Heart right ventricle (tissue), 16 donors: ENCODE measurements at regions of chr1 and their contacts with region 1.

Region 1: DNA sequence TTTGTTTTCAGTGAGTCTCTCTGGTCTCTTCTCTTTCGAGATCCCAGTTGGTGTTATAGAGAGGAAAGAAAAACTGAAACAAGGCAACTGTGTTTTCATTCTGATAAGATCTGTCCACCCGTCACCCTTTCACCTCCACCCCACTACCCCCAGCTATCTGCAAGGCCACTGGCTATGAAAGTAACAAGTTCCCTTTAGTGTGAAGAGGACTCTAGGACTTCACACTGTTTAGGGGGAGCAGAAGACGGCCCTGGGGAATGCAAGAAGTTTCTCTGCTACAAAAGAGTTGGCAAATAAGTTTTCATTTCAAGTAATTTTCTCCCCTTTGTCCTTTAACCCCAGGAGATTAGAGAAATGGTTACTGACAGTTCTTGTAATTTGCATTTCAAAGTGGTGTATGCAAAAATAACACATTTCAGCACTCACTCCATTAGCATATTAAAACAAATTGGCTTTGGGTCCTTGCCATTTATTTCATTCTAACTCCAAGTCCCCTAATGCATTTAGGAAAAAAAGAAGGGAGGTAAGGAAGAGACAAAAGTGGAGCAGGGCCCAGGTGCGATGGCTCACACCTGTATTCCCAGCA is 79.6 kb upstream of the PPM1J start:
- DNase-seq: no peak
- ATAC-seq: no peak
- H3K4me3 ChIP-seq: no peak overlapping the region
- H3K27ac ChIP-seq: no peak overlapping the region
- H3K4me1 ChIP-seq: peaks cover 0 to 5% (median 0%) of the 10 kb centered on the region in 9 donors
- H3K27me3 ChIP-seq: no peaks in the 10 kb centered on the region
- CTCF ChIP-seq: no peak

Region 2: DNA sequence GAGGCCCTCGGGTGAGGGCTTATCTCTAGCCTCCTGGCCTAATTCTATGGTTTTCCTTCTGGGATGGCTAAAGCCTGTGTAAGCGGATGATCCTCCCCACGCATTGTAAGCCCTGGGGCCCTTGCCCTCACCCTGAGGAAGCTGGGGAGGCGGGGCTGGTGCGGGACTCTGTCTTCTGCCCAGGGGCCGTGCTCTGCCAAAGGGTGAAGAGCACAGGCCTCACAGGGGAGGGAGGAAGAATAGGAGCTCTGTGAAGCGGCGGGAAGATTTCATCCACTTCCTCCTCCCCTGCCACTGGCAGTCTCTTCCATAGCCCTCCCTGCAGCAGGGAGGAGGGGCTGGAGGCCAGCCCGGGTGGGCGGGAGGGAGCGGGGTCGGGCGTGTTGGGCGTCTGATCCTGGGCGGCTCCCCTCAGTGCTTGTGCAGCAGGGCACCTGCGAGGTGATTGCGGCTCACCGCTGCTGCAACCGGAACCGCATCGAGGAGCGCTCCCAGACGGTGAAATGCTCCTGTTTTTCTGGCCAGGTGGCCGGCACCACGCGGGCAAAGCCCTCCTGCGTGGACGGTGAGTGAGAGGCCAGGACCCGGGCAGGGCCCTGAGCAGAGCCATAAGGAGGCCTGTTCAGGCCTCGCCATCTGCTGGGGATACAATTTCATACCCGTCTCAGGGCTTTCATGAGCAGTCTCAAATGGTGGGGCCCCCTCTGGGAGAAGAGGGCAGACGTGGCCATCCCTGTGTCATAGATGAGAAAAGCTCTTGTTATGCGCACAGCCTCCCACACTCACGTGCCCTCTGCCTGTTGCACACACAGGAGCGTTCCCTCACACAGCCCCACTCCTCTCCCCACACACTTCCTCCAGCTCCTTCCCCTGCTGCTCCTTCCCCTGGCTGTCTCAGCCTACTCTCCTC is 71.9 kb before region 1 on chr1:
- intact Hi-C with region 1: loop called in 1 of 10 experiments (anchors 5 kb)
- DNase-seq: no peak
- ATAC-seq: peak in 6 of 8 donors; percentile 20 to 53 (median 30)
- H3K4me3 ChIP-seq: peak overlapping the region in 8 of 10 donors; percentile 8 to 41 (median 32)
- H3K27ac ChIP-seq: no peak overlapping the region
- H3K4me1 ChIP-seq: peaks cover 0 to 23% (median 7%) of the 10 kb centered on the region in 9 donors
- H3K27me3 ChIP-seq: peaks cover 0 to 32% (median 12%) of the 10 kb centered on the region in 7 donors
- CTCF ChIP-seq: no peak

Region 3: GRCh38 chr1:112754116-112754628 is 40.6 kb before region 1 on chr1:
- intact Hi-C with region 1: no loop called
- DNase-seq: no peak
- ATAC-seq: no peak
- H3K4me3 ChIP-seq: no peak overlapping the region
- H3K27ac ChIP-seq: no peak overlapping the region
- H3K4me1 ChIP-seq: no peaks in the 10 kb centered on the region
- H3K27me3 ChIP-seq: peaks cover 0 to 24% (median 10%) of the 10 kb centered on the region in 7 donors
- CTCF ChIP-seq: no peak